K562 (cell line): ENCODE measurements at regions of chr9 and their contacts with region 1.

Region 1: DNA sequence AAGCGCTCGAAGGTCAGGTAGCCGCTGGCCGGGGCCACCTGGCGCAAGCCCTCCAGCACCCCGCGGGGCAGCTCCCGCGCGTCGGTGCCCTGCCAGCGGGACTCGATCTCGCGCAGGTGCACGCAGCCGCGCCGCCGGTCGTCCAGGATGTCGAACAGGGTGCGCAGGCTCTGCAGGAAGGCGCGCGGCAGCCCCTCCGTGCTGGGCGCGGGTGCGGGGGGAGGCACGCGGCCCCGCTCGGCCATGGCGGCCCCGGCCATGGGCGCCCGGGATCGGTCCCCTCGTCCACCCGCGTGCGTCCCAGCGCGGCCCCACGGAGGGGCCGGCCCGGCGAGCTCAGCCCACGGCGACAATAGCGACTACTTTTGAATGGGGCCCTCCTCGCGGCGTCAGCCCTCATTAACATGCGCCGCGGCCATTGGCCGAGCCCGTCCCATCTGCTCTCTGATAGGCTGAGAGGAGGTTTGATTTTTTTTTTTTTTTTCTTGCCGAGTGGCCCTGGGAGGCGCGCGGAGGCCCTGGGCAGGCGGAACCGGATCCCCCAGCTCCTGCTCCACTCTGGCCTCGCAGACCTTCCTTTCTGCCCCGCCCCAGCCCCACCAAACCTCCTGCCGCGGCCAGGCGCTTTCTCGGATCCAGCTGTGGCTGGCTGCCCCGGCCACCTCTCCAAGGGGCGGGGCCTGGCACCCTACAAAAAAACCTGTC is at the start of gene SAPCD2:
- DNase-seq: peak; percentile 92 to 96 (median 94)
- ATAC-seq: peak; percentile 92
- H3K4me3 ChIP-seq: peak within 1 kb of the TSS; percentile 65
- H3K27ac ChIP-seq: peak within 1 kb of the TSS; percentile 88
- H3K4me1 ChIP-seq: peaks cover 40 to 78% of the 10 kb centered on the region in 2 experiments
- H3K27me3 ChIP-seq: no peaks in the 10 kb centered on the region
- CTCF ChIP-seq: no peak
- EP300 ChIP-seq: no peak
- POLR2A ChIP-seq: peak; percentile 71
- RAD21 ChIP-seq: no peak
- polyA plus RNA-seq, gene SAPCD2: 3.4 to 3.7 TPM

Region 2: DNA sequence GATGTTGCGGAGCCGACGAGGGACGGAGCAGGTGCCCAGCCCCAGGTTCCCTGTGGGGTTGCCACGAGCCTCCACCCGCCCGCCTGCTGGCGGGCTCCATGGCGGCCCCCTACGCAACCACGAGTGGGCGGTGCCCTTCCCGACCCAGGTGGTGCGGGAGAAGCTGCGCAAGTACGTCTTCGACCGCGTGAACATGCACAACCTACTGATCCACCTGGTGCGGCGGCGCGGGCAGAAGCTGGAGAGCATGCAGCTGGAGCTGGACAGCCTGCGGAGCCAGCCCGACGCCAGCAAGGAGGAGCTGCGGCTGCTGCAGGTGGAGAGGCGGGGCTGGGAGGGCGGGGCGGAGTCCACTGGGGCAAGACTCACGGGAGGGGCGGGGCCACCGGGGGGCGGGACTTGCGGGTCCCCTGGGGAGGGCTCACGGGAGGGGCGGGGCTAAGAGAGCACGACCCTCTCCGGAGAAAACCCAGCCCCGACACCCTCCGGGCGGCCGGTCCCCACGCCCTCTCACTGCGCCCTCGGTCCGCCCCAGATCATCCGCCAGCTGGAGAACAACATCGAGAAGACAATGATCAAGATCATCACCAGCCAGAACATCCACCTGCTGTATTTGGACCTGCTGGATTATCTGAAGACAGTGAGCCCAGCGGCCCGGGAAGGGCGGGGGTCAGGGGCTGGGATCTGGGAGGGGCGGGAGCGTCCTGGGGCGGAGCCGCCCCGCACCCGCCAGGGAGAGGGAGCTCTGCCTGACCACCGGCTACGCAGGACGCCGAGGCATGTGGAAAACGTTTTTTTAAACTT is 270.3 kb before region 1 on chr9:
- CTCF ChIA-PET with region 1: no interaction called
- POLR2A ChIA-PET with region 1: no interaction called
- in situ Hi-C with region 1: no loop called
- intact Hi-C with region 1: no loop called
- DNase-seq: peak; percentile 95 to 97 (median 96)
- ATAC-seq: peak; percentile 86
- H3K4me3 ChIP-seq: peak overlapping the region; percentile 39
- H3K27ac ChIP-seq: peak overlapping the region; percentile 45; the same call in 1 of the 3 replicates
- H3K4me1 ChIP-seq: peaks cover 32 to 72% of the 10 kb centered on the region in 2 experiments; a peak in 4 of 5 replicates
- H3K27me3 ChIP-seq: no peaks in the 10 kb centered on the region
- CTCF ChIP-seq: no peak
- EP300 ChIP-seq: no peak
- POLR2A ChIP-seq: no peak
- RAD21 ChIP-seq: no peak

Region 3: GRCh38 chr9:136961279-136962065 is 108.9 kb before region 1 on chr9:
- CTCF ChIA-PET with region 1: no interaction called
- POLR2A ChIA-PET with region 1: no interaction called
- in situ Hi-C with region 1: no loop called
- intact Hi-C with region 1: no loop called
- DNase-seq: no peak
- ATAC-seq: no peak
- H3K4me3 ChIP-seq: no peak overlapping the region
- H3K27ac ChIP-seq: no peak overlapping the region
- H3K4me1 ChIP-seq: peaks cover 26 to 77% of the 10 kb centered on the region in 2 experiments; a peak in 4 of 5 replicates
- H3K27me3 ChIP-seq: no peaks in the 10 kb centered on the region
- CTCF ChIP-seq: no peak
- EP300 ChIP-seq: no peak
- POLR2A ChIP-seq: no peak
- RAD21 ChIP-seq: no peak

Region 4: DNA sequence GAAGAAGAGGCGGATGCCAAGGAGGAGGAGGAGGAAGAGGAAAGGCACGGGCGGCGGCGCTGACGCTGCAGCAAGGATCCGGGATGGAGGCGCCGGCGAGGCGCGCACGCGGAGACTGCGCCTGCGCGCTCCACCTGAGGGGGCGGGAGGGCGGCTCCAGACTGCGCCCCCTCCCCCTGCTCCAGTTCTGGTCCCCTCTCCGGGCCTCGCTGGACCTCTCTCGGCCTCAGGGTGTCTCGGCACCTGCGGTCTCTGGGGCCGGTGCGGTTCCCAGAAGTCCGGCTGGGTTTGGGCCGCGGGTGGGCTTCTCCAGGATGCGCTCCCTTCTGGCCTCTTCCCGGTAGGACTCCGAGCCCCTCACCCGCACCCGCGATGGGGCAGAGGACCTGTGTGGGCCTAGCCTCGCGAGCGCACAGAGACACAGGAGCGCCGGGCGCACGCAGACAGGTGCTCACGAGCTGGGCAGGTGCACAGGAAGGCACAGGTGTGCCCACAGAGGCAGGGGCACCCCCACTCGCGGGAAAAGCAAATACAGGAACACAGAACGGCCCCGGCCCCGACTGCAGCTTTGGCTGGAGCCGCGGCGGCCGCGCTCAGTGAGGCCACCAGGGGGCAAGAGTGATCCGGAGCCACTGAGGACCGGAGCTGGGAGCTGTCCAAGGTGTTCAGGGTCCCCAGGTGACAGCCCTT is 24.1 kb before region 1 on chr9 and contains the start of gene NPDC1:
- CTCF ChIA-PET with region 1: interaction called, 7 read pairs
- POLR2A ChIA-PET with region 1: interaction called, 4 read pairs
- in situ Hi-C with region 1: no loop called
- intact Hi-C with region 1: loop called (anchors 2 kb)
- DNase-seq: peak; percentile 83 to 91 (median 86)
- ATAC-seq: peak; percentile 82
- H3K4me3 ChIP-seq: no peak within 1 kb of the TSS
- H3K27ac ChIP-seq: no peak within 1 kb of the TSS
- H3K4me1 ChIP-seq: peaks cover 2 to 79% of the 10 kb centered on the region in 2 experiments; a peak in 4 of 5 replicates
- H3K27me3 ChIP-seq: peaks cover 7 to 39% of the 10 kb centered on the region in 2 experiments; a peak in 4 of 5 replicates
- CTCF ChIP-seq: peak; percentile 87 to 94 (median 87)
- EP300 ChIP-seq: no peak
- POLR2A ChIP-seq: no peak
- RAD21 ChIP-seq: peak; percentile 50 to 81; a peak in 3 of 4 replicates
- polyA plus RNA-seq, gene NPDC1: not detected

Region 5: DNA sequence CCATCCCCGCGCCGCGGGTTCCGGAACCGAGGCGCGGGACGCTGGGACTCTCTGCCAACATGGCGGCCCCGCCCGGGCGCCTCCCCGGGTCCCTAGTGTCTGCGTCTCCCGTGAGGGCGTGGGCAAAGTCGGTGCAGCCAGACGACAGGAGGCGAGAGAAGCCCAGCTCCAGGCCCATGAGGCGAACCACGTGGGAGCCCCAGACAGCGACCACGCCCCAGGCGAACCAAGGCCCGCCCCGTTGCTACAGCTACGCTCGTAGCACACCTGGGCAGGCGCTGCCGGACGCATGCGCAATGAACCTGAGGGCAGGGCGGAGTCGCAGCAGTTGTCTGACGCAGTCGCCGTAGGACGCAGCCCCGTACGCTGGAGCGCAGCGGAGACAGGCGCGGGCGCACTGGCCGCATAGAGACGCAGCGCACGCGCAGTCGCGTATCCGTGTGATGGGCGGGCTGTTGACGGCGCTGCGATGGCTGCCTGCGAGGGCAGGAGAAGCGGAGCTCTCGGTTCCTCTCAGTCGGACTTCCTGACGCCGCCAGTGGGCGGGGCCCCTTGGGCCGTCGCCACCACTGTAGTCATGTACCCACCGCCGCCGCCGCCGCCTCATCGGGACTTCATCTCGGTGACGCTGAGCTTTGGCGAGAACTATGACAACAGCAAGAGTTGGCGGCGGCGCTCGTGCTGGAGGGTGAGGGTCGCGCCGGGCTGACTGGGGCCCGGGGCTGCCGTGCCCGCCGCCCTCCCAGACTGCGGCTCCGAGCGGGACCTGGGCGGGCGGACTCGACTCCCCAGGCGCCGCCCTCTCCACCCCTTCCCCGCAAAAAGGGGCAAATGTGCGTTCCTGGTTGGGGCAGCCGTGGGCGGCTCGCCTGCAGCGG is 16.4 kb after region 1 on chr9 and contains the start of gene MAN1B1:
- CTCF ChIA-PET with region 1: no interaction called
- POLR2A ChIA-PET with region 1: interaction called, 14 read pairs
- in situ Hi-C with region 1: no loop called
- intact Hi-C with region 1: loop called (anchors 2 kb)
- DNase-seq: peak; percentile 95 to 100 (median 96)
- ATAC-seq: peak; percentile 89
- H3K4me3 ChIP-seq: peak within 1 kb of the TSS; percentile 79
- H3K27ac ChIP-seq: peak within 1 kb of the TSS; percentile 87
- H3K4me1 ChIP-seq: peaks cover 32 to 64% of the 10 kb centered on the region in 2 experiments; a peak in 4 of 5 replicates
- H3K27me3 ChIP-seq: no peaks in the 10 kb centered on the region
- CTCF ChIP-seq: peak in 1 of 3 experiments; percentile 5; a peak in 2 of 6 replicates
- EP300 ChIP-seq: no peak; the same call in 1 of the 2 replicates
- POLR2A ChIP-seq: peak; percentile 82
- RAD21 ChIP-seq: no peak
- polyA plus RNA-seq, gene MAN1B1: 0.55 to 0.89 TPM

Region 6: GRCh38 chr9:137200311-137201204 is 130.2 kb after region 1 on chr9 and contains the start of gene TPRN:
- CTCF ChIA-PET with region 1: no interaction called
- POLR2A ChIA-PET with region 1: no interaction called
- in situ Hi-C with region 1: no loop called
- intact Hi-C with region 1: no loop called
- DNase-seq: peak; percentile 99 to 100 (median 100)
- ATAC-seq: peak; percentile 96
- H3K4me3 ChIP-seq: peak within 1 kb of the TSS; percentile 52
- H3K27ac ChIP-seq: peak within 1 kb of the TSS; percentile 75
- H3K4me1 ChIP-seq: peaks cover 31 to 86% of the 10 kb centered on the region in 2 experiments
- H3K27me3 ChIP-seq: no peaks in the 10 kb centered on the region
- CTCF ChIP-seq: no peak
- EP300 ChIP-seq: no peak
- POLR2A ChIP-seq: peak; percentile 88
- RAD21 ChIP-seq: no peak
- polyA plus RNA-seq, gene TPRN: 0.31 to 0.34 TPM